ENCODE measurements at regions of chr9 and their contacts with region 1.

Region 1: GRCh38 chr9:35690431-35691333 is 957 bp upstream of the TPM2 start:
- DNase-seq: no peak
- ATAC-seq: peak; percentile 76
- H3K4me3 ChIP-seq: peak overlapping the region; percentile 71 to 89
- H3K27ac ChIP-seq: peak overlapping the region; percentile 89
- H3K4me1 ChIP-seq: peaks cover 31% of the 10 kb centered on the region
- H3K27me3 ChIP-seq: no peaks in the 10 kb centered on the region
- CTCF ChIP-seq: no peak

Region 2: DNA sequence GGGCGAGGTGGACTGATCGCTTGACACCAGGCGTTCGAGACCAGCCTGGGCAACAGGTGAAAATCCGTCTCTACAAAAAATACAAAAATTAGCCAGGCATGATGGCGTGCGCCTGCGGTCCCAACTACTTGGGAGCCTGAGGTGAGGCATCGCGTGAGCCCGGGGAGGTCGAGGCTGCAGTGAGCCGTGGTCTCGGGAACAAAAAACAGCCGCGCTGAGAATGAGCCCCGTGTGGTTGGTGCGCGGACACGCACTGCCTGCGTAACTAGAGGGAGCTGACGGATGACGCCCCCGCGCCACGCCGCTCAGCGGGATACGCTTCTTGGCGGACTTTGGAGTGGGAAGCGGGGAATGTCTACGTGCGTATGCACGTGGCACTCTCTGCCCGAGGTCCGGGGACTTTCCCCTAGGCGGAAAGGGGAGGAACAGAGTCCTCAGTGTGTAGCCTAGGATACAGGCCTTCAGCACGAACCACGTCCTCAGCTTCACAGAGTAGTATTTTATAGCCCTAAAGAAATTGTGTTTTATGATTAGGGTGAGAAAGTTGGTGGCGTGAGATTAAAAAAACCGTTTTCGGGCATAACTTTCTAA is 33.0 kb before region 1 on chr9 and contains the start of gene RMRP:
- CTCF ChIA-PET with region 1: interaction called, 8 read pairs
- POLR2A ChIA-PET with region 1: interaction called, 14 read pairs
- in situ Hi-C with region 1: no loop called
- intact Hi-C with region 1: loop called (anchors 5 kb)
- DNase-seq: peak; percentile 95
- ATAC-seq: peak; percentile 93
- H3K4me3 ChIP-seq: peak within 1 kb of the TSS; percentile 64 to 70
- H3K27ac ChIP-seq: peak within 1 kb of the TSS; percentile 94
- H3K4me1 ChIP-seq: peaks cover 37% of the 10 kb centered on the region
- H3K27me3 ChIP-seq: no peaks in the 10 kb centered on the region
- CTCF ChIP-seq: no peak
- total RNA-seq, gene RMRP: 29,896 TPM

Region 3: DNA sequence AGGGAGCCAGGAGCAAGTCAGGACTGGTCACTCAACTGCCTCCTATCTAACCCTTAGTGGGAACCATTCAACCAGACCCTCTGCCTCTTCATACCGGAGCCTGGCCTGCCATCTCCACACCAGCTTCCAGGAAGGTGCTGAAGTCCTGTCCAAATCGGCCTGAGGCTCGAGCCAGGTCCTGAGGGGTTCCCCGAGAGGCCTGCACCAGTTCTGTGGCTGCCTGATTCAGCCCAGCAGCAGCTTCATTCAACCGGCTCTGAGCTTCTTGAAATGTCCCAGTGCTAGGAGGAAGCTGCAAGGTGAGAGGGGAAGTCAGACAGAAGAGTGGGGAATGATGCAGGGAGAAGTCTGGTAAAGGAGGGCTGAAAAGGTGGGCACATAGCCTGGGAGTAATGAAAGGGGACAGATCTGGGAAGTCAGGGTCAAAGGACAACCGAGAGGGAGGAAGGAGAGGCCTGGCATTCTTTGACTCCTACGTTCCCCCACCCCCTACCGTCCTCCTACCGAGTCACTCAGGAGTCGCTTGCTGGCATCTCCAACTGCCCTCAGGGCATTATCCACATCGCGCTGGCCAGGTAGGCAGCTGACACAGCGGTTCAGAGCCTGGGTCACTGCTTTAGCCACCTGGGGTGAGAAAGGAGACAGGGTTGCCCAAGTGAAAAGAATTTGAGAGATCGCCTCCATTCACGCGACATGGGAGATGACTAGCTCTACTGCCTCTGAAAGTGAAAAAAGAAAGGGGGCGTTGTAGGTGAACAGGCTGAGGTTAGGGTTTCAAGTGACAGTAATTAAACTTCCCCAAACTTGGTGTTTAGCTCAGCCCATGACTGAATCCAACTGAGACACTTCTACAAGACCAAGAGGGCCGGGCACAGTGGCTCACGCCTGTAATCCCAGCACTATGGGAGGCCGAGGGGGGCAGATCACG is 21.1 kb after region 1 on chr9:
- CTCF ChIA-PET with region 1: interaction called, 6 read pairs
- POLR2A ChIA-PET with region 1: interaction called, 14 read pairs
- in situ Hi-C with region 1: no loop called
- intact Hi-C with region 1: no loop called
- DNase-seq: no peak
- ATAC-seq: no peak
- H3K4me3 ChIP-seq: no peak overlapping the region
- H3K27ac ChIP-seq: no peak overlapping the region
- H3K4me1 ChIP-seq: no peaks in the 10 kb centered on the region
- H3K27me3 ChIP-seq: no peaks in the 10 kb centered on the region
- CTCF ChIP-seq: no peak

Region 4: GRCh38 chr9:35732122-35732799 is 41.6 kb after region 1 on chr9 and contains the starts of genes CREB3 and TLN1:
- CTCF ChIA-PET with region 1: interaction called, 13 read pairs
- POLR2A ChIA-PET with region 1: interaction called, 11 read pairs
- in situ Hi-C with region 1: no loop called
- intact Hi-C with region 1: no loop called
- DNase-seq: peak; percentile 85
- ATAC-seq: peak; percentile 93
- H3K4me3 ChIP-seq: peak within 1 kb of the TSS; percentile 82 to 99
- H3K27ac ChIP-seq: peak within 1 kb of the TSS; percentile 95
- H3K4me1 ChIP-seq: peaks cover 49% of the 10 kb centered on the region
- H3K27me3 ChIP-seq: no peaks in the 10 kb centered on the region
- CTCF ChIP-seq: no peak
- total RNA-seq, gene CREB3: 67.0 TPM
- total RNA-seq, gene TLN1: 347 TPM

Region 5: DNA sequence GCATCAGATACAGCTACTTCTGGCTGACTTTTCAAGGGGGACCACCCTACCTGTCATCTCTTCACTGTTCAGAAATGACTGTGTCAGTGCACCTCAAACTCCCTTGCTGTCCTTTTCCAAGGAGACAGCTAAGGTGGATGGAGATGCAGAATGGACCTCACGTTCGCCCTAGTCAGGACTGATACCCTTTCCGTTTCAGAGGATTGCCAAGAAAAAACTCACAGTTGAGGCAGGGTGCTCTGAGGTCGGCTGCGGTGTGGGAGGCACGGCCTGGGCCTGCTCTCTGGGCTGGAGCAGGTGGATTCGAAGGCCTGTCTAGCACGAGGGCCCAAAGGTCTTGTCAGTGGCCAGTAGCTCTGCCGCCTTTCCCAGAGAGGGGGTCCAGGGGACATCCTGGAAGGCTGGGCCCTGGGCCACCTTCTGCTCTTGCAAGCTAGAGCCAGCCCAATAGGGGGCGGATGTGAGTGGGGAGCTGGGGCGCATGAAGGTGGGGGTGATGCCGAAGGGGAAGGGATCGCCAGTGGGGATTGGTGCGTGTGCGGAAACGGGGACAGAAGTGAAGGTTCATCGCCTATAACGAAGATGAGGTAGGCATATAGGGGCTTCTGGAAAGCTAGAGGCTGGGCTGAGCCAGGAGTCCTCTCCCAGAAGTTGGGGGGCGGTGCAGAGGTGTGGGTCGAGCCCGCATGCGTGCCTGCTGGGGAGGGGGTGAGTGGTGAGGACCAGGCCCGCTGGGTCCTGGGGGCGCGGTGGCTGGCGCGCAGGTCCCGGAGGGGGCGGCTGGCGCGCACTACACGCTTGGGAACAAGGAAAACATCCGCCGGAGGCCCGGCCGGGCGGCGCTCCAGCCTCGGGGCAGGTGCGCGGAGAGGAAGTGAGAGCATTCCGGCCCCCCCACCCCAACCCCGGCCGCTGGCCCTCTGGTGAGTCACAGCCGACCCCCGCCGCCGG is 65.9 kb after region 1 on chr9:
- CTCF ChIA-PET with region 1: interaction called, 10 read pairs
- POLR2A ChIA-PET with region 1: no interaction called
- in situ Hi-C with region 1: no loop called
- intact Hi-C with region 1: no loop called
- DNase-seq: no peak
- ATAC-seq: peak; percentile 87
- H3K4me3 ChIP-seq: peak overlapping the region; percentile 75 to 92
- H3K27ac ChIP-seq: peak overlapping the region; percentile 88
- H3K4me1 ChIP-seq: peaks cover 22% of the 10 kb centered on the region
- H3K27me3 ChIP-seq: no peaks in the 10 kb centered on the region
- CTCF ChIP-seq: no peak

Region 6: GRCh38 chr9:35954942-35955546 is 264.4 kb after region 1 on chr9:
- CTCF ChIA-PET with region 1: no interaction called
- POLR2A ChIA-PET with region 1: interaction called, 13 read pairs
- in situ Hi-C with region 1: no loop called
- intact Hi-C with region 1: no loop called
- DNase-seq: peak; percentile 48
- ATAC-seq: peak; percentile 94
- H3K4me3 ChIP-seq: no peak overlapping the region
- H3K27ac ChIP-seq: no peak overlapping the region
- H3K4me1 ChIP-seq: no peaks in the 10 kb centered on the region
- H3K27me3 ChIP-seq: peaks cover 18% of the 10 kb centered on the region
- CTCF ChIP-seq: peak; percentile 92

Measured in Panc1 (cell line).